Sciatic nerve (tissue), 2 donors: ENCODE measurements at regions of chr7 and their contacts with region 1.

Region 1: GRCh38 chr7:56106108-56107073 is at the start of gene CHCHD2:
- DNase-seq: peak; percentile 96
- ATAC-seq: peak; percentile 100
- total RNA-seq, gene CHCHD2: 170 TPM

Region 2: GRCh38 chr7:56040734-56041133 is 65.7 kb before region 1 on chr7:
- intact Hi-C with region 1: loop called (anchors 2 kb)
- DNase-seq: peak; percentile 3
- ATAC-seq: no peak

Region 3: GRCh38 chr7:56079450-56080185 is 26.8 kb before region 1 on chr7:
- intact Hi-C with region 1: loop called (anchors 1 kb)
- DNase-seq: peak; percentile 83
- ATAC-seq: peak; percentile 85